Activated CD8-positive, alpha-beta T cell treated with anti-CD3 and anti-CD28 coated beads for 36 hours (primary cell): ENCODE measurements at regions of chr14 and their contacts with region 1.

Region 1: DNA sequence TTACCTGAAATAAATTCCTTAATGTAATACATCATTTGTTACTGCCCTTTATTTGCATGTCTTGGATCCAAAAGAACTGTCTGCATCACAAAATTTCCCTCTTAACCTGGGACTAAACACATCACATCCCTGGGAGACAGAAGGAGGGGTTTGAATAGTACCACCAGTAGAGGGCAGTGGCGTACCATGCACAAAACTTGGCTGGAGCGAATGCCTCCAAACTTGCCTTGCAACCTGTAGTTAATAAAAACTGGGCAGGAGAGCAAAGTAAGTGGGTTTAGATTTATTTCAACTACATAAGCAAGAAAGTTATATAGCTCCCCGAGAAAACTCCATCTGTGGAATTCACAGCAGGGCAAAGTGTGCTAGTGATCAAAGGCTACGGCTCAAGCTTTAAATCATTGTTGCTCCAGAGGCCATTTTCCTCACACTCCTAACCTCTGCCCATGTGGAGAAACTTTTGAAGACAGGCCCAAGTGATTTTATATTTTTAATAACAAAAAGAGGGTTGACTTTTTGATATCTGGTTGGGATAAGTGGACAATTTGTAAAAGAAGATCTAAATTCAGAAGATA is 1176.7 kb upstream of the SEL1L start:
- DNase-seq: peak; percentile 56
- ATAC-seq: no peak
- H3K4me3 Mint-ChIP-seq: no peak overlapping the region
- H3K27ac Mint-ChIP-seq: no peak overlapping the region
- H3K4me1 Mint-ChIP-seq: no peaks in the 10 kb centered on the region
- H3K27me3 Mint-ChIP-seq: no peaks in the 10 kb centered on the region
- CTCF ChIP-seq: peak; percentile 71

Region 2: GRCh38 chr14:82694820-82695219 is 15.5 kb before region 1 on chr14:
- CTCF ChIA-PET with region 1: no interaction called
- POLR2A ChIA-PET with region 1: no interaction called
- intact Hi-C with region 1: no loop called
- DNase-seq: no peak
- ATAC-seq: no peak
- H3K4me3 Mint-ChIP-seq: no peak overlapping the region
- H3K27ac Mint-ChIP-seq: no peak overlapping the region
- H3K4me1 Mint-ChIP-seq: no peaks in the 10 kb centered on the region
- H3K27me3 Mint-ChIP-seq: no peaks in the 10 kb centered on the region
- CTCF ChIP-seq: no peak

Region 3: GRCh38 chr14:83463500-83464098 is 753.2 kb after region 1 on chr14:
- CTCF ChIA-PET with region 1: no interaction called
- POLR2A ChIA-PET with region 1: no interaction called
- intact Hi-C with region 1: loop called (anchors 10 kb)
- DNase-seq: peak; percentile 37
- ATAC-seq: no peak
- H3K4me3 Mint-ChIP-seq: no peak overlapping the region
- H3K27ac Mint-ChIP-seq: no peak overlapping the region
- H3K4me1 Mint-ChIP-seq: no peaks in the 10 kb centered on the region
- H3K27me3 Mint-ChIP-seq: no peaks in the 10 kb centered on the region
- CTCF ChIP-seq: peak; percentile 61